Left ventricle myocardium inferior (tissue), 1 donor: ENCODE measurements at regions of chr18 and their contacts with region 1.

Region 1: DNA sequence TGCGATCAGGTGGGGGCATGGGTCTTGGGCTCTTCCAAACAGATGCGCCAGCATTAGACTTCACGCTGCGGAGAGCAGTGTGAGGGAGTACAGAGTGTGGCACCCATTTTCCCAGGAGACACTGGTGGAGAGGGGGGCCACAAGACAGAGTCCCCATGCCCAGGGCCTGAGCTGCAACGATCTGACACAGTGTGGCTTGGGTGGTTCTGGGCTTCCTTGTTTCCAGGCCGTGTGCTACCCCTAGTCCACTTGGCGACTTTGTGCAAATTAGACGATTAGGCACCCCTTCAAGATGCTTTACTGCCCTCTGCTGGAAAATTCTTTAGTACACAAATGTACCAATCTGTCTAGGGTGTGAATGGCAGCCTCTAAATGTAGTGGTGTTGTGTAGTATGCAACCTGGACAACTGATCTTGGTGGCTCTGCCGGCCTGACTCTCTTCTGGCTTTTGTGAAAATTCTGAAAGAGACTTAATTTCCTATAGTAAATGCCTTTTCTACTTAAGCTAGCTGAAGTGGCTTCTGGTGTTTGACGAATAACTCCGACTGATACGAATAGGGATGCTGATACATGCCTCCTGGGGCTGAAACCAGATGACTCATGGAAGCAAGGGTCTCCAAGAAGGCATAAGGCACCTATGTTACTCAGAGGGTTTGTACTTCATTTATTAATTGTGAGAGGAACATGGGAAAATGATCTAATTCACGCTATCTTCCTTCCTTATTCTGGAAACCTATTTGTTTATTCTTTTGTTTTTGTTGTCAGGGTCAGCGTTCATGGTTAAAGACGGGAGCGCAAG is 92.3 kb upstream of the SMAD2 start:
- DNase-seq: no peak
- H3K4me3 ChIP-seq: no peak overlapping the region
- H3K27ac ChIP-seq: peak overlapping the region; percentile 50
- H3K4me1 ChIP-seq: peaks cover 26% of the 10 kb centered on the region
- H3K27me3 ChIP-seq: peaks cover 18% of the 10 kb centered on the region
- CTCF ChIP-seq: peak; percentile 71

Region 2: GRCh38 chr18:47772374-47773248 is 250.1 kb before region 1 on chr18:
- intact Hi-C with region 1: loop called (anchors 5 kb)
- DNase-seq: peak; percentile 38
- H3K4me3 ChIP-seq: no peak overlapping the region
- H3K27ac ChIP-seq: no peak overlapping the region
- H3K4me1 ChIP-seq: no peaks in the 10 kb centered on the region
- H3K27me3 ChIP-seq: peaks cover 4% of the 10 kb centered on the region
- CTCF ChIP-seq: peak; percentile 80